ENCODE measurements at regions of chr1 and their contacts with region 1.

Region 1: GRCh38 chr1:38873027-38873969 is at the start of gene MYCBP:
- DNase-seq: peak; percentile 95 to 99 (median 98)
- ATAC-seq: peak; percentile 100
- H3K4me3 ChIP-seq: peak within 1 kb of the TSS; percentile 81 to 94
- H3K27ac ChIP-seq: peak within 1 kb of the TSS; percentile 53 to 80
- H3K4me1 ChIP-seq: peaks cover 4 to 28% of the 10 kb centered on the region in 2 donors
- H3K27me3 ChIP-seq: no peaks in the 10 kb centered on the region
- CTCF ChIP-seq: peak in 1 of 2 donors; percentile 37
- polyA plus RNA-seq, gene MYCBP: 20.6 to 29.7 (median 23.8) TPM

Region 2: GRCh38 chr1:38578271-38578951 is 294.9 kb before region 1 on chr1:
- intact Hi-C with region 1: no loop called
- DNase-seq: peak in 3 of 4 donors; percentile 44 to 84 (median 68)
- ATAC-seq: peak; percentile 93
- H3K4me3 ChIP-seq: peak overlapping the region in 1 of 2 donors; percentile 7
- H3K27ac ChIP-seq: no peak overlapping the region
- H3K4me1 ChIP-seq: peaks cover 5 to 17% of the 10 kb centered on the region in 2 donors
- H3K27me3 ChIP-seq: peaks cover 16 to 52% of the 10 kb centered on the region in 2 donors
- CTCF ChIP-seq: no peak

Region 3: DNA sequence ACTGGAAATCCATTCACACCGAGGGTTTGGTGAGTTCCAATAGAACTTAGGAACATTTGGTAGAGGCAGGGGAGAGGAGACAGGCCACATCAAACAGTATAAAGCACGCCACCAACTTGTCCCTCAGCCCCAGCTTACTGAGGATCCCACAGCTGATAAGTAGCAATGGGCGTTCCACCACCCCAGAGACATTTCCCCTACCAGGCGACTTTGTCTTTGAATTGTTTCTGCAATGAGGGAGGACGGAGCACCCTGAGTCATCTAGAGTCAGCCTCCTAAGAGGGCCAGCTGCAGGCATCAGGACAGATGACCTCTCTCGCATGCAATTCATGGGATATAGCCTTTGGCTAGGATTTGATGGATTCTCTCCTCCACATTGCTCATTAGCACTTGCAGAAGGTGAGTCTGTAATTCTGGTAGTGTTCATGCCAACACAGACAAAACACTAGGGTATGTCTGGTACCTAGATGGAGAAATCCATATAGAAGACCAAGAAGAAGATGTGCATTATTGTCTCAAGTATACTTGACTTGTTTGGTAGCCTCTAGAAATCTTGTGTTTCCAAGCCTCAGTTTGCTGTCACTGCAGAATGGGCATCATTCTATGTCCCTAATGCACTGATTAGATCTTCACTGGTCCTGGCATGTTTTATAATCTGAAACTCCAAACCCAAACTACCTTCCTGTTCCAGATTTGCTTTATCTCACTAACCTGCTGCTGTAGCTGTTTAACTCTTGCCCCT is 82.7 kb before region 1 on chr1:
- intact Hi-C with region 1: no loop called
- DNase-seq: no peak
- ATAC-seq: no peak
- H3K4me3 ChIP-seq: no peak overlapping the region
- H3K27ac ChIP-seq: no peak overlapping the region
- H3K4me1 ChIP-seq: no peaks in the 10 kb centered on the region
- H3K27me3 ChIP-seq: peaks cover 0 to 67% of the 10 kb centered on the region in 2 donors
- CTCF ChIP-seq: no peak

Region 4: DNA sequence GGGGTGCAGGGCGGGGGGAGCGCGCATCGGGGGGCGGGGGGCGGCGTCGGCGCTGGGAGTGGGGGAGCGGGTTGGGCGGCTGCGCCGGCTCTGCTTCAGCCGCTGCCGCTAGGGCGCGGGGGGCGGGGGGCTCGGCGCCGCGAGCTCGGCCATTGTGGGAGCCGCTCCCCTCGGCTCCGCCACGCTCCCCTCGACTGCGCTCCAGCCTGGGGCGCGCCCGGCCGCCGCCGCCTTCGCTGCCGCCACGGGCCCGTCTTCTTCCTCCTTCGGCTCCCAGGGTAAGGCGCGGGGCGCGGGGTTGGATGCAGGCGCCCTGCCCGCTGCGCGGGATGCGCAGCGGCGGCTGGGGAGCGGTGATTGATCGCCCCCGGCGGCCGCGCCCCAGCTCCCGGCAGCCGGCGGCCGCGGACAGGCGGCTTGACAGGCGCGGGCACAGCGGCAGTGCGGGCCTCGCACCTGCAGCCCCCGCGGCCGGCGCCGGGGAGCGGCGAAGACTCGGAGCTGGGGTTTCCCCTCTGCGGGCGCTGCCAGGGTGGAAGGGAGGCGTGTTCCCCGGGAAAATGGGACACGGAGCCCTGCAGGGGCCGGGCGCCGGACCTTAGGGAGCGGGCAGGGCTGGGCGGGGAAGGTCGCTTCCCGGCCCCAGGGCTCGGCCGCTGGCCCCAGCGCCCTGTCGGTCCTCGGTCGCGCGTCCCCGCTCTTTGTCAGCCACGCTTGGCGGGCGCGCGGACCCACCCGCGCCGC is 208.1 kb after region 1 on chr1:
- intact Hi-C with region 1: loop called in 1 of 2 experiments (anchors 10 kb)
- DNase-seq: peak in 2 of 4 donors; percentile 40 to 86
- ATAC-seq: peak; percentile 38
- H3K4me3 ChIP-seq: peak overlapping the region; percentile 33 to 36
- H3K27ac ChIP-seq: no peak overlapping the region
- H3K4me1 ChIP-seq: peaks cover 0 to 10% of the 10 kb centered on the region in 2 donors
- H3K27me3 ChIP-seq: peaks cover 11 to 56% of the 10 kb centered on the region in 2 donors
- CTCF ChIP-seq: no peak